ENCODE measurements at regions of chr16 and their contacts with region 1.

Region 1: DNA sequence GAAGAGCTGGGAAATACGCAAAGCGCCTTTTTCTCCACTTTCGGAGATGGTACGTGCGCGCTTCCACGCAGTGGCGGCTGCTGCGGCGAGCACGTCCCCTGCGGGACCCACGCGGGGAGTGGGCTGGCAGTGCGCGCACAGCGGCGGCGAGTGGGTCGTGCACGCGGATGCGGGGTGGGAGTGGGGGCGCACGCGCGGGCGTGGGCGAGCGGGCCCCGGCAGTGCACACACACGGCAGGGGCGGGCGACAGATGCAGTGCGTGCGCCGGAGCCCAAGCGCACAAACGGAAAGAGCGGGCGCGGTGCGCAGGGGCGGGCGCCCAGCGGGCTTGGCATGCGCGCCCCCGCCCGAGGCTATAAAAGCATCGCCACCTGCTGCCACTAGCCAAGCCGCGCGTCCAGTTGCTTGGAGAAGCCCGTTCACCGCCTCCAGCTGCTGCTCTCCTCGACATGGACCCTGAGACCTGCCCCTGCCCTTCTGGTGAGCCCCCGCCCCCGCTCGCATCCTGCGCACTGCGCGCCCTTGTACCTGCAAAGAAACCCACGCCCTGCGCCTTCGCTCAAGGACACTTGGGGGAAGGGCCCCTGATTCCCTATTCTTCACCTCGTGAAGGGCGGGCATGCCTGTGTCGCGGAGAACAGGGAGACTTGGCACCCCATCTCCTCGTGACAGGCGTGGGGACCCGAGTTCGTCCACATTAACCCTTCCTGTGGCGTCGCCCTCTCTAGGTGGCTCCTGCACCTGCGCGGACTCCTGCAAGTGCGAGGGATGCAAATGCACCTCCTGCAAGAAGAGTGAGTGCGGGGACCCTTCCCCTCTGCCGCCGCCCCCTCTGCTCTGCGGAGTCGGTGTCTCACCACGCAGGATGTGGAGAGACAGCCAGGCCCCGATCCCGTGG is at the start of gene MT3:
- DNase-seq: peak; percentile 68
- ATAC-seq: peak; percentile 89
- H3K4me3 Mint-ChIP-seq: peak within 1 kb of the TSS; percentile 78
- H3K27ac Mint-ChIP-seq: peak within 1 kb of the TSS; percentile 2
- H3K4me1 Mint-ChIP-seq: peaks cover 9% of the 10 kb centered on the region
- H3K27me3 Mint-ChIP-seq: peaks cover 12% of the 10 kb centered on the region
- CTCF ChIP-seq: no peak
- total RNA-seq, gene MT3: 30.7 to 33.6 TPM

Region 2: GRCh38 chr16:56600398-56600999 is 11.1 kb after region 1 on chr16:
- CTCF ChIA-PET with region 1: interaction called, 10 read pairs
- POLR2A ChIA-PET with region 1: interaction called, 3 read pairs
- intact Hi-C with region 1: no loop called
- DNase-seq: peak; percentile 67
- ATAC-seq: peak; percentile 81
- H3K4me3 Mint-ChIP-seq: no peak overlapping the region
- H3K27ac Mint-ChIP-seq: no peak overlapping the region
- H3K4me1 Mint-ChIP-seq: peaks cover 3% of the 10 kb centered on the region
- H3K27me3 Mint-ChIP-seq: peaks cover 6% of the 10 kb centered on the region
- CTCF ChIP-seq: peak; percentile 69

Region 3: DNA sequence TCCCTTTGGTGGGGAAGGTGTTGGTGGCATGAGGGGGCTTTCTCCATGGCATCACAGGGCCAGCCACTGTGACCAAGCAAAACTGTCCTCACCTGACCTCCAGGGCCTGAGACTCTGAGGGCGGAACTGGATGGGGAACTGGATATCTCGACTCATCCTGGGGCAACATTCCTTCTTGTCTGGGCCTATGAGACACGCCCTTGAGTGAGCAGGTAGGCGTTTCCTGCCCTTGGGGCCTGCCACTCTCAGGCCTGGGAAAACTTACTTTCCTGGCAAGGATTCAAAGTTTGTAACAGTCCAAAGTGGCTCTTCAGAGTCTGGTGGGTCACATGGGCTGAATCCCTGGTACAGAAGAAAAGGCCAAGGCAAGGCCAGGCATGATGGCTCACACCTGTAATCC is 102.5 kb after region 1 on chr16:
- CTCF ChIA-PET with region 1: no interaction called
- POLR2A ChIA-PET with region 1: no interaction called
- intact Hi-C with region 1: loop called (anchors 5 kb)
- DNase-seq: no peak
- ATAC-seq: no peak
- H3K4me3 Mint-ChIP-seq: no peak overlapping the region
- H3K27ac Mint-ChIP-seq: no peak overlapping the region
- H3K4me1 Mint-ChIP-seq: no peaks in the 10 kb centered on the region
- H3K27me3 Mint-ChIP-seq: no peaks in the 10 kb centered on the region
- CTCF ChIP-seq: no peak

Measured in activated CD8-positive, alpha-beta T cell treated with anti-CD3 and anti-CD28 coated beads for 36 hours (primary cell).